ENCODE measurements at regions of chr2 and their contacts with region 1.

Region 1: DNA sequence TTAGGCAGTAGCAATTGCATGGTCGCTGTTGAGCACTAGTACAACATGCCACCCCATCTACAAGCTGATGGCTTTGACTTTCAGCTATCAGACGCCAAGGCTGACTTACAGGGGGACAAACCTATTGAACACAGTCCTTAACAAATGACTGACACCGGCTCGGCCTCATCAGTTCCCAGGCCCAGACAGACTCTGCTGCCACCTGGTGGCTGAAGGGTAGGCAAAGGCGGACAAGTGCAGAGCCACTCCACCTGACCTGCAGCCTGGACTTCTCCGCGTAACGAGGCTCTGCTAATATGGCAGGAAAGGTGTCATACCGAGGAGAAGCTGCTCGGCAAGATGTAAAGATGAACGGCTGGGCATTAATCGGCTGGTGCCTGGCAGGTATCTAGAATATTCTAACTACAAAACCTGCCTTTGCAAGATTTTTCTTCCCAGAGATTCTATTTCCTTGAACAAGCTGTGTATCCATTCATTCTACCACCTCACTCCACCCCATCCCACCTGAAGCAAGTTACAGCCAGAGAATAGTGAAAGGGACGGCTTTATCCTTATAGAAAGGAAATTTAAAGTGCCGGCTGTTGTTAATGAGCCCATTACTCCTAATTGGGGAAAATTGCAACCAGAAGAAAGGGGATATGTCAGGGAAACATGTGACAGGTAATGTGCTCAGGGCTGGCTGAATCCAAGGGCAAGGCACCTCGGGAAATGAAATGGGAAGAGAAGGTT is 67.4 kb downstream of the STEAP3 start:
- DNase-seq: peak; percentile 80 to 87
- H3K4me3 ChIP-seq: no peak overlapping the region
- H3K27ac ChIP-seq: peak overlapping the region in 1 of 5 donors; percentile 32
- H3K4me1 ChIP-seq: peaks cover 7 to 26% (median 16%) of the 10 kb centered on the region in 4 donors
- H3K27me3 ChIP-seq: no peaks in the 10 kb centered on the region
- CTCF ChIP-seq: peak in 5 of 7 experiments; percentile 40 to 83 (median 74)
- EP300 ChIP-seq: no peak
- POLR2A ChIP-seq: no peak

Region 2: GRCh38 chr2:118882709-118883210 is 408.3 kb before region 1 on chr2:
- intact Hi-C with region 1: loop called (anchors 10 kb)
- DNase-seq: peak; percentile 62 to 70
- H3K4me3 ChIP-seq: peak overlapping the region; percentile 17 to 34 (median 24)
- H3K27ac ChIP-seq: no peak overlapping the region
- H3K4me1 ChIP-seq: peaks cover 0 to 8% (median 3%) of the 10 kb centered on the region in 4 donors
- H3K27me3 ChIP-seq: peaks cover 0 to 43% (median 21%) of the 10 kb centered on the region in 3 donors
- CTCF ChIP-seq: peak in 5 of 7 experiments; percentile 33 to 75 (median 70)
- EP300 ChIP-seq: no peak
- POLR2A ChIP-seq: no peak